ENCODE measurements at regions of chr6 and their contacts with region 1.

Region 1: DNA sequence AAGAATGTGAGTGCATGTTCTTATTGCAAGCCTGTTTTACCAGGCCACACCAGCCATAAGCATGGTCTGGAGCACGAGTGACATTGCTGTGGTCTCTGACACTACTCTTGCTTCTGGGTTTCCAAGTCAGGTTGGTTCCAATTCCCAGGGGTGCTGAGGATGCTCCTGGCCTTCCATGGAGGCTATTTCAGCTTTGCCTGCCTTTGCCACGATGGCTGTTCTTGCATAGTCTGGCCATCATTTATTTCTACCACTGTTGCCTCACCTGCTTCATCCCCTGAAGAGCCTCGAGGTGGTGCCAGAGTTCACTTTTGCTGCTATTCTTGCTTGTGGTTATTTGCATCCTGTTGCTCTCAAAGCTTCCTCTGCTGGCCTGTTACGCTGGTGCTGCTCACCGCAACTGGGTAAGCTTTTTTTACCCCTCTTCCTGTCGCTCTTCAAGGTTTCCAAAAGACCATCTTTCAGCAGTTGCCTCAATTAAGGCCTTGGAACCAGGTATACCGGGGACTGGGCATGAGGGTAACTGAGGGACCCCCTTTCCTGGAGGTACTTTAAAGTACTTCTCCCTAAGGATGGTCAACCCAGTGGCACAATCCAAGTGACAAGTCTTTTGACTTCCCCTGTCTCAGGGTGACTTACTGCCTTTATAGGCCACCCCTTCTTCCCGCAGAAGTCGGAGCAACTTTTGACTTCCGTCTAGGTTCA is 64.5 kb downstream of the AKAP7 start:
- DNase-seq: no peak
- H3K4me3 ChIP-seq: no peak overlapping the region
- CTCF ChIP-seq: peak; percentile 58

Region 2: DNA sequence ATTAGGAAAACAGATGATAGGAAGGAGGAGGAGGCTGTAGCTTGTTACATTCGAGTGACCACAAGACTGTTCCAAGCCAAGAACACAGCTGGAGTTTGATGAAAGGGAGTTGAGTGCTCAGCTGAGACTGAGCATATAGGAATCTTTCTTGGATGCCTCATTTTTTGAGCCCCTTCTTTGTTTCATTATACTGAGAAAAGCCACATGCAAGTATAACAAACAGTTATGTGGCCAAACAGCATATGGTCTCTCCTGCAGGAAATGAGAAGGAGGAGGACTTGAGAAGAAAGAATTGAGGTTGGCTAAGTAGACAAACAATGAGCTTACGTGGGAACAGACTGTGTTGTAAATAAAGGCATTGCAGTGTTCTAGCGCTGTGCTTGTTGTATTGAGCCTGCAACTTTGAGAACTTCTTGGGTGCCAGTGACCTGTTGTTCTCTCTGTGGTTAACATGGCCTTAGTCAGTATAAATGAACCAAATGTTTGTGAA is 13.8 kb after region 1 on chr6:
- CTCF ChIA-PET with region 1: interaction called, 11 read pairs
- POLR2A ChIA-PET with region 1: no interaction called
- DNase-seq: no peak
- H3K4me3 ChIP-seq: no peak overlapping the region
- CTCF ChIP-seq: no peak